ENCODE measurements at regions of chr12 and their contacts with region 1.

Region 1: GRCh38 chr12:104682751-104683279 is 226.1 kb downstream of the CHST11 start:
- DNase-seq: peak; percentile 58
- ATAC-seq: peak; percentile 90
- H3K4me3 Mint-ChIP-seq: peak overlapping the region; percentile 73
- H3K27ac Mint-ChIP-seq: peak overlapping the region; percentile 90
- H3K4me1 Mint-ChIP-seq: peaks cover 71% of the 10 kb centered on the region
- H3K27me3 Mint-ChIP-seq: no peaks in the 10 kb centered on the region

Region 2: GRCh38 chr12:104695453-104696148 is 12.8 kb after region 1 on chr12:
- POLR2A ChIA-PET with region 1: interaction called, 11 read pairs
- DNase-seq: peak; percentile 59
- ATAC-seq: peak; percentile 87
- H3K4me3 Mint-ChIP-seq: peak overlapping the region; percentile 62
- H3K27ac Mint-ChIP-seq: peak overlapping the region; percentile 74
- H3K4me1 Mint-ChIP-seq: peaks cover 57% of the 10 kb centered on the region
- H3K27me3 Mint-ChIP-seq: no peaks in the 10 kb centered on the region

Measured in activated naive CD8-positive, alpha-beta T cell treated with anti-CD3 and anti-CD28 coated beads, Interleukin-2, amount 10 ng/mL, durations not matched to agents 7 days and 5 days (primary cell).